Panc1 (cell line): ENCODE measurements at regions of chr14 and their contacts with region 1.

Region 1: GRCh38 chr14:68441542-68441941 is 351.3 kb downstream of the ZFP36L1 start:
- DNase-seq: no peak
- ATAC-seq: no peak
- H3K4me3 ChIP-seq: no peak overlapping the region
- H3K27ac ChIP-seq: no peak overlapping the region
- H3K4me1 ChIP-seq: no peaks in the 10 kb centered on the region
- H3K27me3 ChIP-seq: no peaks in the 10 kb centered on the region
- CTCF ChIP-seq: no peak

Region 2: DNA sequence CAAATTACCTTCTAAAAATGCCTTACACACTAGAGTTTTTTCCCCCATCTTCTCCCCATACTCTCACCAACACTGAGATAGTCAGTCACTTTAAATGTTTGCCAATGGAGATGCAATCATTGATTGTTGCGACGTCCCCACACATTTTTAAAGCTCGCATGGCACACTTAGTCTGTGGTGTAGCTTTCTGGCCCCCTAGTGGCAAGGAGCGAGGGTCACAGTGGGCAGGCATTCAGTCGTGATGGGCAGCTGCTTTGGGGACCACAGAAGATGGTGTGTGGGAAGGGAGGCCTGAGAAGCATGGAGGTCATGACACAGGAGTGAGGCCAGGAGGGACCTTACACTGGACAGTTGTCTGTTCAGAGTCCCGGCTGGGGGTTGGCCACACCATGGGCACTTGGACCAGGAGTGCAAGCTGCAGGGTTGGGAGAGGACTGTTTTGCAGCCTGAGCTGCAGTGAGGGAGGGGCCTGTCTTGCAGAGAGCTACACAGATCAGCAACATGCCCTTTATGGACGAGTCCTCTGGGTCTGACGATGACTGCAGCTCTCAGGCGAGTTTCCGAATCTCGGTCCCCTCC is 870.2 kb before region 1 on chr14:
- CTCF ChIA-PET with region 1: no interaction called
- POLR2A ChIA-PET with region 1: no interaction called
- in situ Hi-C with region 1: no loop called
- intact Hi-C with region 1: no loop called
- DNase-seq: peak; percentile 30
- ATAC-seq: peak; percentile 95
- H3K4me3 ChIP-seq: no peak overlapping the region
- H3K27ac ChIP-seq: no peak overlapping the region
- H3K4me1 ChIP-seq: no peaks in the 10 kb centered on the region
- H3K27me3 ChIP-seq: no peaks in the 10 kb centered on the region
- CTCF ChIP-seq: peak; percentile 88

Region 3: DNA sequence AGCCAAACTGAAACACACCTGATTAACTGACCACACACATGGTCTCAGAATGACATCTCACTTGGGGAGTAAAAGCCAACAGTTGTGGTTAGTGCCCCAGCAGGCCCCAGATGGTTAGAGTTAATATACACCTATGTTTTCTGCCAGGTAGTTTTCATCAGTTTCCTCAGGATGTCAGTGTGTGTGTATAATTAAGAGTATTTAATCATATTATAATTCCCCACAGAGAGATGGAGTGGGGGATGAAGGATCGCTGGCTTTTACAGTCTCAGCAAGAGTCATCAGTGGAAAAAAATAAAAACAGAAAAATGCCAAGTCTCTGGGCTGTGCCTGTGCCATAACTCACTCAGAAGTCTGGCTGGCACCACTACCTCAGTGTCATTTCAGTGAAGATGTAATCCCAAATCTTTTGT is 61.2 kb before region 1 on chr14:
- CTCF ChIA-PET with region 1: no interaction called
- POLR2A ChIA-PET with region 1: no interaction called
- in situ Hi-C with region 1: no loop called
- intact Hi-C with region 1: no loop called
- DNase-seq: no peak
- ATAC-seq: no peak
- H3K4me3 ChIP-seq: no peak overlapping the region
- H3K27ac ChIP-seq: no peak overlapping the region
- H3K4me1 ChIP-seq: no peaks in the 10 kb centered on the region
- H3K27me3 ChIP-seq: no peaks in the 10 kb centered on the region
- CTCF ChIP-seq: no peak

Region 4: GRCh38 chr14:69013943-69014775 is 572.6 kb after region 1 on chr14:
- CTCF ChIA-PET with region 1: no interaction called
- POLR2A ChIA-PET with region 1: interaction called, 19 read pairs
- in situ Hi-C with region 1: no loop called
- intact Hi-C with region 1: no loop called
- DNase-seq: no peak
- ATAC-seq: peak; percentile 75
- H3K4me3 ChIP-seq: no peak overlapping the region
- H3K27ac ChIP-seq: no peak overlapping the region
- H3K4me1 ChIP-seq: peaks cover 5% of the 10 kb centered on the region
- H3K27me3 ChIP-seq: no peaks in the 10 kb centered on the region
- CTCF ChIP-seq: no peak